ENCODE measurements at regions of chr5 and their contacts with region 1.

Region 1: GRCh38 chr5:134577796-134578363 is 52.4 kb downstream of the JADE2 start:
- DNase-seq: peak; percentile 93

Region 2: DNA sequence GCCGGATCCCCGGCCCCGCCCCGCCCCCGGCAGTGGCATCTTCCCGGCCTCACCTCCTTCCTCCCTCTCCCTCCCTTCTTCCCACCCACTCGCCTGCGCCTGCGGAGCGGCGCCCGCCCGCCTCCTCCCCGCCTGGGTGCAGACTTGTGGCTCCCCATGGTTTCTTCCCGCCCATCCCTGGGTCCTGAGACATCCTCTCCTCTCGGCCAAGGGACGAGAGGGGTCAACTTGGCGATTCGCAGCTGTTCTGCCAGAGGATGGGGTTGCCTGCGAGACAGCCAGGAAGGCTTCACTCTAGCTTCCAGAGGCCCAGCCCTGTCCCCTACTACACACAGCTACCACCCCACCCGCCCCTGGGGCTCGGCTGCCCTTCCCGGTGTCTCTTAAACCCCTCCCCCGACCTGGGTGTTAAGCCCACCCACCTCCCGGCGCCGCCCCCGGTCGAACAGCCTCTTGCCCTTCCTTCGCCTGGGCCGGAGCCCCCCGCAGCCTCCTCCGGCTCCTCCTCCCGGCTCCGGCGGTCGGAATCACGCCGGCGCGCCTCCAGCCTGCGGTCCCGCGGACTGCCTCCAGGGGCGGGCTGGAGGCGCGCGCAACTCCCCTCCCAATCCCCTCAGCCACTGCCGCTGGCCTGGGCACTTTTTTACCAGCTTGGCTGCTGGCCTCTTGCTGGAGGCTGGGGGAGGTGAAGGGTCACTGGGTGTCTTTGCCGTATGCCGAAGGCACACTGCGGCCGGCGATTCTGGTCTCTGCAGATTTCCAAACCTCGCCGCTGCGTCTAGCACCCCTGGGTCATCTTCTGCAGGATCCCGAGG is 50.5 kb before region 1 on chr5:
- intact Hi-C with region 1: loop called (anchors 2 to 10 kb)
- DNase-seq: peak; percentile 95

Region 3: DNA sequence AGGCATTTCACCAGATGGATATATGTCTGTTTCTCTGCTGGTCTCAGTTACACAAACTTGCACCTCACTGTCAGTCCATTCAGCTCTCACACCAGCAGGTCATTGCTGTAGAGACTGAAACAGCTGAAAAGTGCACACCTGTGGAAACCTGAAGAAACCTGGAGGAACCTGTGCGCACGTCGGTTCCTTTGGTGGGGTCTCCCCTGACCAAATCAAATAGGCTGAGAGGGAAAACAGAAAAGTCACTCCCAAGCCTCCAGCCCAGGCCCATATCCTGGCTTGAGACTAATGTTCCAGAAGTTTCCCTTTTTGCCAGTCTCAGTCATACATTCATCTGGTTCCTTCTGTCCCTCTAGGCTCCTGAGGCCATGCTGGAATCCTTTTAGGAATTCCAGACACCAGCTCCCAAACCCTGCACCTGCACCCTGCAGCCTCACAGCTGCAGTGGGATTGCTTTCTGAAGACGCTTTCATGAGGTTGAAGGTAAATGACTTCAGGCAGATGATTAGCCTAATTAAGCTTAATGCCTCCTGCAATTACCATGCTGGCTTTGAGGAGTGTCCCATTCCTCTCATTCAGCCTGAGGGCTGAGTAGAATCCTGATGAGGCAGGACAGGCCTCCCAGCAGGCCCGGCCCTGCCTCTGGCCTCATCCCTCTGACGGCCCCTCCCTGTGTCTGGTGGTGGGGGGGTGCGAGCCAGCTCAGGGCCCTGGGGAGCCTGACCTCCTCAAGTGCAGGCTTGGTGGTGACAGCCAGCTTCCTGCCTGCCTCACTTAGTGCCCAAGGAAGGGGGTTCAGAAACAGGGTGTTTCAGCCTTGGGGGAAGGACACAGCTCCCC is 1025.2 kb after region 1 on chr5:
- intact Hi-C with region 1: no loop called
- DNase-seq: no peak